Activated naive CD4-positive, alpha-beta T cell treated with anti-CD3 and anti-CD28 coated beads for 36 hours (primary cell): ENCODE measurements at regions of chr3 and their contacts with region 1.

Region 1: GRCh38 chr3:60017631-60018030 is 967.8 kb upstream of the CFAP20DC start:
- DNase-seq: peak; percentile 86
- H3K4me3 Mint-ChIP-seq: peak overlapping the region; percentile 74
- H3K27ac Mint-ChIP-seq: peak overlapping the region; percentile 100
- H3K4me1 Mint-ChIP-seq: peaks cover 82% of the 10 kb centered on the region
- H3K27me3 Mint-ChIP-seq: no peaks in the 10 kb centered on the region

Region 2: GRCh38 chr3:59709702-59710553 is 307.7 kb before region 1 on chr3:
- CTCF ChIA-PET with region 1: no interaction called
- intact Hi-C with region 1: no loop called
- DNase-seq: peak; percentile 32
- H3K4me3 Mint-ChIP-seq: no peak overlapping the region
- H3K27ac Mint-ChIP-seq: no peak overlapping the region
- H3K4me1 Mint-ChIP-seq: no peaks in the 10 kb centered on the region
- H3K27me3 Mint-ChIP-seq: no peaks in the 10 kb centered on the region

Region 3: DNA sequence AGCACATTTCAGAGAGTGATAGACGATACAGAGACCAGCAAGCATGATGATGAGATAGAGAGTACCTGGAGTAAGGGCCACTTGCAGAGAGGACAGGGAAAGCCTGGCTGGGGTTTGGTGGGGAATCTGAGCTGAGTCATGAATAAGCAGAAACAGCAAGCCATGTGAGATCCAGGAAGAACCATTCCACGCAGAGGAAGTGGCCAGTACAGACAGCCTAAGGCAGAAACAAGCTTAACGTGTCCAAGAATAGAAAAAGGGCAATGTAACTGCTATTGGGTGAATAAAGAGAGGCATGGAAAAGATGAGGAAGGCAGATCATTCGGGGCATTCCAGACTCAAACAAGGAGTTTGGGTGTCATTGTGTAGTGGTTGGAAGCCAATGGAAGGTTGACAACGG is 151.6 kb before region 1 on chr3:
- CTCF ChIA-PET with region 1: no interaction called
- intact Hi-C with region 1: loop called (anchors 1 kb)
- DNase-seq: no peak
- H3K4me3 Mint-ChIP-seq: no peak overlapping the region
- H3K27ac Mint-ChIP-seq: no peak overlapping the region
- H3K4me1 Mint-ChIP-seq: peaks cover 59% of the 10 kb centered on the region
- H3K27me3 Mint-ChIP-seq: no peaks in the 10 kb centered on the region

Region 4: DNA sequence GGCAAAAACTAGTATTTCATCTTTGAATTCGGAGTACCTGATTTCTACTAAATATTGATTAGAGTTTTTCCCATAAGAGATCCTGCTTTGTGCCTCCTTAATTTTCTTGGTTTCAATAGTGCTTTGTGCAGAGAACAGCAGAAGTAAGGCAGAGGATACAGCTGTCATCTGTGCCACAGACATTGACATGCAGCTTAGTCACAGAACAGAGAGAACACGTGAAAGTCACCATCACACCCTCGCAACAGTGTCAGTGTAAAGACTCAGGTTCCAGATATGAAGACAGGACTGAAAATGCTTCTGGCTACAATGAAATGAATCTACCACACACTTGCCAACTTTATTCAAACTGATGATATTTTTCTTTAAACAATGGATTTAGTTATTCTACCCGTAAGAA is 25.1 kb before region 1 on chr3:
- CTCF ChIA-PET with region 1: interaction called, 6 read pairs
- intact Hi-C with region 1: loop called (anchors 1 kb)
- DNase-seq: peak; percentile 76
- H3K4me3 Mint-ChIP-seq: peak overlapping the region; percentile 43
- H3K27ac Mint-ChIP-seq: peak overlapping the region; percentile 84
- H3K4me1 Mint-ChIP-seq: peaks cover 96% of the 10 kb centered on the region
- H3K27me3 Mint-ChIP-seq: no peaks in the 10 kb centered on the region

Region 5: GRCh38 chr3:60046210-60046609 is 28.6 kb after region 1 on chr3:
- CTCF ChIA-PET with region 1: interaction called, 5 read pairs
- intact Hi-C with region 1: loop called (anchors 1 kb)
- DNase-seq: no peak
- H3K4me3 Mint-ChIP-seq: no peak overlapping the region
- H3K27ac Mint-ChIP-seq: peak overlapping the region; percentile 91
- H3K4me1 Mint-ChIP-seq: peaks cover 80% of the 10 kb centered on the region
- H3K27me3 Mint-ChIP-seq: no peaks in the 10 kb centered on the region